ENCODE measurements at regions of chr6 and their contacts with region 1.

Region 1: DNA sequence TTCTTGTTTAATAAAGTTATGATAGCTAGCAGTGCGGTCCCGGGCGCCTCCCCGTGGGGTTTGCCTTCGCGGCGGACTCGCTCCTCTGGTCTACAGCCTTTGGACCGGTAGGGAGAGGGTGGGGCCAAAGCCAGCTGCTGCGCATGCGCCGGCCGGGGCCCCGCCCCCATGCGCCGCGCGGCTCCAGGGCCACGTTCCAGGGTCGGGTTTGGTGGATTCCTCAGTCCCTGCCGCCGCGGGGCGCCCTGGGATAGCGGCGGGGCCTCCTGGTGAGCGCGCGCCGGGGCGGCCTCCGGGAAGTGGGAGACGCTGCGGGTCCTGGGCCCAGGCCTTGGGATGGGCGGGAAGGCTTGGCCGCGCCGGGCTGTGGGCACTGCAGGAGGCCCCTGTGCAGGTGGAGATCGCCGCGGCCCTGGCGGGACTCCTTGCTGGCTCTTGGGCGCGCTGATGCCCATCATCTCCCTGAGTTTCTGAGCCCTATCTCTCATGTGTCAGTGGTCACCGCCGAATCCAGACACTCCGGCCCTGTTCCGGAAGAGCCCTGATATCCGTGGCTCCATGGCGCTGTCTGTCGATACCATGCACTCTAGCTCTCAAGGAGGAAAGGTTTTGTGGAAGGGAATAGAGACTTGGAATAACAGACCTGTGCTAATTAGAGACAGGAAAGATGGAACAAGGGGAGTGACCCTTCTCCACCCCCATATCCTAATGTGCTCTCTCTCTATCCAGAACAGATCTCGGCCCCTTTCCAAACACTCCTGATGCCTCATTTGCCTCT is at the start of gene VARS2:
- DNase-seq: peak; percentile 90
- ATAC-seq: peak; percentile 98
- H3K4me3 Mint-ChIP-seq: peak within 1 kb of the TSS; percentile 87
- H3K27ac Mint-ChIP-seq: peak within 1 kb of the TSS; percentile 87
- H3K4me1 Mint-ChIP-seq: peaks cover 30% of the 10 kb centered on the region
- H3K27me3 Mint-ChIP-seq: no peaks in the 10 kb centered on the region
- total RNA-seq, gene VARS2: 46.6 to 54.1 TPM

Region 2: DNA sequence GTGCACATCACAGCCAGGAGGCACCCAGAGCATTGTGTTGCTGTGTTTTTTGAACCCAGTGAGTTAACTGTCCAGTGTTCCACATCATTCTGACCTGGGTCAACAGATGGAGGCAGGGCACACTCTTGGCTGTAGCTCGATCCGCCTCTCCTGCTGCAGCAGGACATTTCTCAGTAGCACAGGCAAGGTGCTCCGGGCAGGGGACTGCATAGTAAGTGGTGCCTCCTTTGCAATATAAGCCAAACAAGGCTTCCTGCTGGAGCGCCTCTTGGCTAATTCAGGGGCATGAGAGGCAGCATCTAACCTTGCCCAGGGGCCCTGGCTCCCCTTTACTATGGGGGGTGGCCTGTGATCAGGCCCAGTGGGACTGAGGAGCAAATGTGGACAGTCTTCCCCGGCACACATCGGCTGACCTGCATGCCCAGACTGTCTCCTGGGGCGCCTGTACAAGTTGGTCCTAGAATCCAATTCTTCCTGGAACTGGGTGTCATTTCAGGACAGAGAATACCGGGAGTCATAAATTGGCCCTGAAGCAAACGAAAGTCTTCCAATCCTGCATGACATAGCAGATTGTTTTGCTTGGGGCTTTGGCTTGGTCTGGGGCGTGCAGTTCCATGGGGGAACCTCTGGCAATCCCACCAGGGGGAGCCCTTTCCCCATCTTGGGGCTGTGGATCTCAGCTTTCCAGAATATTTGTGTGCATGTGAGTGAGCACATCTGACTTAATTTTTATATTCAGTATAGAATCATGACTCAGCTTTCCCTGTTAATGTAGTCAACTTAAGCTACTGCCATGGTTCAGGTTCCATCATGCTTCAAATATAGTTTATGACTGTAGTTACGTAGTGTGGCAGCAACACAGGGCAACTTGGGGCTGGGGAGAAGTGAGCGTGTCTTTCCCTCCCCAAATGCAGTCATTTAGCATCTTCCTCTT is 86.0 kb before region 1 on chr6:
- CTCF ChIA-PET with region 1: interaction called, 42 read pairs
- DNase-seq: peak; percentile 86
- ATAC-seq: peak; percentile 83
- H3K4me3 Mint-ChIP-seq: peak overlapping the region; percentile 82
- H3K27ac Mint-ChIP-seq: peak overlapping the region; percentile 98
- H3K4me1 Mint-ChIP-seq: peaks cover 56% of the 10 kb centered on the region
- H3K27me3 Mint-ChIP-seq: no peaks in the 10 kb centered on the region

Region 3: DNA sequence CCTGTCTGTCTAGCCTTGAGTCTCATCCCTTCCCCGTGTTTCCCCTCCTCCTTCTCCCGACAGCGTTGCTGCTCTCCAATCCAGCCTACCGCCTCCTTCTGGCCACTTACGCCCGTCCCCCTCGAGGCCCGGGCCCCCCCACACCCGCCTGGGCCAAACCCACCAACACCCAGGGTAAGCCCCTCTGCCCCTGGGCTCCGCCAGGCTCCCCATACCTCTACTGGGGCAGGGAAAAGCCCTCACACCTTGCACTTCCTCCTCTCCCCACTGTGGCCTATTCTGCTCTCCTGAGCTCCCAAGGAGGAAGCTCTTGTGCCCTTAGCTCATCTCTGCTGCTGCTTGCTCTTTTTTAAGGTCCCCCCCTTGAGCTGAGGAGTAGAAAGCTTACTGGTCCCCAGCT is 18.9 kb before region 1 on chr6:
- CTCF ChIA-PET with region 1: interaction called, 14 read pairs
- DNase-seq: no peak
- ATAC-seq: no peak
- H3K4me3 Mint-ChIP-seq: no peak overlapping the region
- H3K27ac Mint-ChIP-seq: no peak overlapping the region
- H3K4me1 Mint-ChIP-seq: no peaks in the 10 kb centered on the region
- H3K27me3 Mint-ChIP-seq: no peaks in the 10 kb centered on the region

Region 4: DNA sequence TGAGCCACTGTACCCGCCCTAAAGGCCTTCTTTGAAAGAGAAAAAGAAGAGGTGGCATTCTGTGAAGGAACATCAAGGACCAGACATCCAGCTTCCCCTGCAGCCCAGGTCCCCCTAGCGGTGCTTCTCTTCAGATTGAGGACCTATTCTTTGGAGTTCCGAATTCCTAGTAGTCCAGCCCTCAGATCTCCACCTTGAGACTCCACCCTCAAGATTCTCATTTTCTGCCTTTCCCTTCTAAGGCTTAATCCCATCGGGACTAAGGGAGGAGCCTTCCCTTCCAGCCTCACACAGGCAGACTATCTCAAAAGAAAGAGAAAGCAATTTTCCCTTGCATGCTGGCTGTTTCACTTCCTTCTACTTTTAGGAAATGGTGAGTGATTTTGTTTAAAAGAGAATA is 128.5 kb after region 1 on chr6:
- CTCF ChIA-PET with region 1: interaction called, 10 read pairs
- DNase-seq: no peak
- ATAC-seq: no peak
- H3K4me3 Mint-ChIP-seq: no peak overlapping the region
- H3K27ac Mint-ChIP-seq: no peak overlapping the region
- H3K4me1 Mint-ChIP-seq: no peaks in the 10 kb centered on the region
- H3K27me3 Mint-ChIP-seq: peaks cover 58% of the 10 kb centered on the region

Region 5: GRCh38 chr6:31079656-31080261 is 165.5 kb after region 1 on chr6:
- CTCF ChIA-PET with region 1: interaction called, 86 read pairs
- DNase-seq: peak; percentile 80
- ATAC-seq: peak; percentile 82
- H3K4me3 Mint-ChIP-seq: peak overlapping the region; percentile 28
- H3K27ac Mint-ChIP-seq: peak overlapping the region; percentile 43
- H3K4me1 Mint-ChIP-seq: peaks cover 3% of the 10 kb centered on the region
- H3K27me3 Mint-ChIP-seq: peaks cover 15% of the 10 kb centered on the region

Region 6: DNA sequence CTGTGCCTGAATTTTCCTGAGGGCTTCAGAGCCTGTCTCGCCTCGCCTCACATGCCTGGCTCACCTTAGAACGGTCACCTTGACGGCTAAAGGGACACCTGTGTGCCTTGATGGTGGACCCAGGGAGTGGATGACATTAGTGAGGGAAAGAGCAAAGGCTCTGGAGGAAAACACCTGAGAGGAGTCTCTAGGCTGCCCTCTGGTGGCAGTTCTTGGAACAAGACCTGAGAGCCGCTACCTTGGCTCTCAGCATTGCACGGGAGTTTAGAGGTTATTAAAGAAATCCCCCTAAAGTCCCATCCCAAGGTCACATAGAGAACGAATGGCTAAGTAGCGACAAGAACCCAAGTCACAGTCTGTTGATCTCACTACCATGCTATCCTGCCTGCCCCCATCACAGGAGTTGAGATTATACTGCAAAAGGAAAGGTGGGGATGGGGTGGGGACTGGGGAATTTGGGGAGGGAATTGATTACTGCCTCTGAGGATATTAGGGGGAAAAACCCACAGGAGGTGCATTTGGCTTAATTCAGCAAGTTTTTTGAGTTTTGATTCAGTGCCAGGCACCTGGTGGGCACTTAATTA is 213.9 kb after region 1 on chr6:
- CTCF ChIA-PET with region 1: interaction called, 10 read pairs
- DNase-seq: peak; percentile 82
- ATAC-seq: peak; percentile 80
- H3K4me3 Mint-ChIP-seq: no peak overlapping the region
- H3K27ac Mint-ChIP-seq: no peak overlapping the region
- H3K4me1 Mint-ChIP-seq: no peaks in the 10 kb centered on the region
- H3K27me3 Mint-ChIP-seq: peaks cover 18% of the 10 kb centered on the region